ENCODE measurements at regions of chr15 and their contacts with region 1.

Region 1: GRCh38 chr15:69475769-69476358 is 23.2 kb downstream of the RPLP1 start:
- DNase-seq: peak; percentile 66 to 82 (median 69)
- ATAC-seq: peak; percentile 49 to 86 (median 75)
- H3K4me3 ChIP-seq: no peak overlapping the region
- H3K27ac ChIP-seq: no peak overlapping the region
- H3K4me1 ChIP-seq: no peaks in the 10 kb centered on the region
- H3K27me3 ChIP-seq: no peaks in the 10 kb centered on the region
- CTCF ChIP-seq: peak; percentile 84 to 95 (median 90)
- POLR2A ChIP-seq: no peak

Region 2: DNA sequence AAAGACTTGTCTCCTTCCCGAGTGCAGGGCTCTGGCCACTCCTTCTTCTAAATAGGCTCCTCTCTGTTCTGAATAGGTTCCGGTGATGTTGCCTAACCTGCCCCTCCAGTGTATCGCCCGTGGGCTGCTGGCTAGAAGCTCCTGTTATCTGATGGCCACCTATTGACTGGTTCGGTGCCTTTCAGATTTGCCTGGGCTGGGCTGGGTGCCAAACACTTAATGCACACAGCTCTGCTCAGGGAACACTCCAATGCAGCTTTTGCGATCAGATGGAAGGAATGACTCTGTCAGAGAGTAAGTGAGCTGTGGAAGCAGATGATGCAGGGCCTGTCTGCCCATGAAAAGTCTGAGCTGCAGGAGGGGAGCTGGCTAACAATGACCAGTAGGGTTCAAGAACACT is 784.2 kb before region 1 on chr15:
- intact Hi-C with region 1: no loop called
- DNase-seq: no peak
- ATAC-seq: peak in 1 of 4 donors; percentile 31
- H3K4me3 ChIP-seq: no peak overlapping the region
- H3K27ac ChIP-seq: no peak overlapping the region
- H3K4me1 ChIP-seq: peaks cover 0 to 8% (median 6%) of the 10 kb centered on the region in 12 donors
- H3K27me3 ChIP-seq: no peaks in the 10 kb centered on the region
- CTCF ChIP-seq: no peak
- POLR2A ChIP-seq: no peak

Region 3: GRCh38 chr15:69652751-69653305 is 177.0 kb after region 1 on chr15:
- intact Hi-C with region 1: loop called in 1 of 10 experiments (anchors 5 kb)
- DNase-seq: no peak
- ATAC-seq: peak in 1 of 4 donors; percentile 62
- H3K4me3 ChIP-seq: no peak overlapping the region
- H3K27ac ChIP-seq: no peak overlapping the region
- H3K4me1 ChIP-seq: peaks cover 0 to 5% (median 0%) of the 10 kb centered on the region in 12 donors
- H3K27me3 ChIP-seq: peaks cover 0 to 63% (median 4%) of the 10 kb centered on the region in 9 donors
- CTCF ChIP-seq: peak in 5 of 12 donors; percentile 10 to 32 (median 19)
- POLR2A ChIP-seq: no peak

Region 4: DNA sequence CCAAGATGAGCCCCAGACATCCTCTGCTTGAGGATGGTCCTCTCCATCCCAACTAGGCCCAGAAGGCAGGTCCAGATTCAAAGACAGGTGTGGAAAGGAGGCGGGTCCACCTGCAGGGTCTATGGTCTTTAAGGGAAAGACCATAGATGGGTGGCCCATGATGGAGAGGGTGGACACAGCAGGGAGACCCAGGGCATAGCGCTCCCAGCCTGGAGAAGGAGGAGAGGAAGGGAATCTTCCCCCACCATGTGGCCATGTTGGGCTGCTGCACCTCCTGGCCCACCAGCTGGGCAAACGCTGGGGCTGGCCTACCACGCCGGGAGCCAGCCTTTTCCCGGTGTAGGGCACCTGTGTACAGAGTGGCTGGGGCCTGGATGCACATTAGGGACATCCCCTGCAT is 887.0 kb after region 1 on chr15:
- intact Hi-C with region 1: loop called in 3 of 10 experiments (anchors 5 to 10 kb)
- DNase-seq: peak in 4 of 5 donors; percentile 35 to 70 (median 40)
- ATAC-seq: peak in 3 of 4 donors; percentile 82 to 89 (median 87)
- H3K4me3 ChIP-seq: no peak overlapping the region
- H3K27ac ChIP-seq: no peak overlapping the region
- H3K4me1 ChIP-seq: no peaks in the 10 kb centered on the region
- H3K27me3 ChIP-seq: peaks cover 0 to 16% (median 0%) of the 10 kb centered on the region in 9 donors
- CTCF ChIP-seq: peak; percentile 68 to 82 (median 71)
- POLR2A ChIP-seq: no peak

Region 5: GRCh38 chr15:70488002-70488605 is 1012.2 kb after region 1 on chr15:
- intact Hi-C with region 1: loop called (anchors 1 to 5 kb)
- DNase-seq: peak; percentile 58 to 82 (median 62)
- ATAC-seq: peak; percentile 29 to 75 (median 60)
- H3K4me3 ChIP-seq: no peak overlapping the region
- H3K27ac ChIP-seq: peak overlapping the region in 1 of 12 donors; percentile 76
- H3K4me1 ChIP-seq: peaks cover 0 to 74% (median 0%) of the 10 kb centered on the region in 12 donors
- H3K27me3 ChIP-seq: peaks cover 0 to 6% (median 0%) of the 10 kb centered on the region in 9 donors
- CTCF ChIP-seq: peak; percentile 91 to 97 (median 95)
- POLR2A ChIP-seq: no peak

Region 6: DNA sequence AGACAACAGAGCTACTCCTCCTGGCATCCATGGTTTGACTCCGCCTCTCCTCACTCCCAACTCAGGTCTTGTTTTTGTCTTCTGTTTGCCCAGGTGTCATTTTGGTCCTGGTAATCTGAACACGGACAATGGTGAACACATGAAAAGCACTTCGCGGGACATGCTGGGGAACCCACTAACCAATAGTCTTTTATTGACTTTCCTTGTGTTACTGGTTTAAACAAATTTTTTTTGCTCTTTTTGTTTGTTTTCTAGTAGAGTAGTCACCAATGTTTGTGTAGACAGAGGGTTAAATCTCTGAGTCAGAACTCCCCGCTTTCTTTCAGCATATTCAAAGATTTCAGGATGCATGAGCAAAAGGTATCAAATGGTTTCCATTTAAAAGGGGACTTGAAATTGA is 1339.8 kb after region 1 on chr15:
- intact Hi-C with region 1: loop called in 2 of 10 experiments (anchors 5 to 10 kb)
- DNase-seq: no peak
- ATAC-seq: no peak
- H3K4me3 ChIP-seq: no peak overlapping the region
- H3K27ac ChIP-seq: no peak overlapping the region
- H3K4me1 ChIP-seq: peaks cover 0 to 17% (median 3%) of the 10 kb centered on the region in 12 donors
- H3K27me3 ChIP-seq: no peaks in the 10 kb centered on the region
- CTCF ChIP-seq: no peak
- POLR2A ChIP-seq: no peak